ENCODE measurements at regions of chr11 and their contacts with region 1.

Region 1: GRCh38 chr11:31870609-31871309 is 59.6 kb upstream of the PAX6 start:
- DNase-seq: peak; percentile 76 to 86
- H3K4me3 ChIP-seq: no peak overlapping the region
- H3K4me1 ChIP-seq: no peaks in the 10 kb centered on the region; the same call in 1 of the 2 replicates
- H3K27me3 ChIP-seq: peaks cover 31% of the 10 kb centered on the region

Region 2: GRCh38 chr11:31397239-31397834 is 473.4 kb before region 1 on chr11:
- in situ Hi-C with region 1: loop called (anchors 10 kb)
- DNase-seq: peak in 1 of 2 experiments; percentile 19
- H3K4me3 ChIP-seq: no peak overlapping the region
- H3K4me1 ChIP-seq: no peaks in the 10 kb centered on the region
- H3K27me3 ChIP-seq: no peaks in the 10 kb centered on the region

Region 3: DNA sequence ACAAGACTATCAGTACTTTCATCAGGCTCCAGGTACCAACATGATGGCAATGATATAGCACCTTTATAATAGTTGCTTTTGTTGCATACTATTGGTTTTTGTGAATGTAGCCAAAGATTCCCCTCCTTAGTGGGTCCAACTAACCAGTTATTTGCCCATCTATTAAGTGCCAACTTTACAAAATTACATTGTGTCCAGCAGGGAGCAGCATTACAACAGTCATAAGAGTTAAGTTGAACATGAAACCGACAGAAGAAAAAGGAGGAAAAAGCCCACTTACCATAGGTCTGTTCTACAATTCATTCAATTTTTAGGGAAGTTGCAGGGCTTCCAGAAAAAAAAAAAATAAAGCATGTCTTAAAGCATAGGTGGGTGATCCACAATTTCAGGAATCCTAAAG is 382.9 kb before region 1 on chr11:
- in situ Hi-C with region 1: loop called (anchors 10 kb)
- DNase-seq: peak; percentile 32 to 49
- H3K4me3 ChIP-seq: no peak overlapping the region
- H3K4me1 ChIP-seq: peaks cover 8% of the 10 kb centered on the region
- H3K27me3 ChIP-seq: no peaks in the 10 kb centered on the region

Region 4: GRCh38 chr11:31641477-31642062 is 229.2 kb before region 1 on chr11:
- in situ Hi-C with region 1: loop called (anchors 25 kb)
- DNase-seq: peak; percentile 61 to 65
- H3K4me3 ChIP-seq: no peak overlapping the region
- H3K4me1 ChIP-seq: no peaks in the 10 kb centered on the region
- H3K27me3 ChIP-seq: no peaks in the 10 kb centered on the region

Measured in HAP-1 (cell line).